ENCODE measurements at regions of chr16 and their contacts with region 1.

Region 1: GRCh38 chr16:1428511-1428910 is 2.4 kb upstream of the PERCC1 start:
- DNase-seq: peak; percentile 77
- ATAC-seq: peak; percentile 81
- H3K4me3 Mint-ChIP-seq: no peak overlapping the region
- H3K27ac Mint-ChIP-seq: no peak overlapping the region
- H3K4me1 Mint-ChIP-seq: no peaks in the 10 kb centered on the region
- H3K27me3 Mint-ChIP-seq: no peaks in the 10 kb centered on the region
- CTCF ChIP-seq: no peak

Region 2: DNA sequence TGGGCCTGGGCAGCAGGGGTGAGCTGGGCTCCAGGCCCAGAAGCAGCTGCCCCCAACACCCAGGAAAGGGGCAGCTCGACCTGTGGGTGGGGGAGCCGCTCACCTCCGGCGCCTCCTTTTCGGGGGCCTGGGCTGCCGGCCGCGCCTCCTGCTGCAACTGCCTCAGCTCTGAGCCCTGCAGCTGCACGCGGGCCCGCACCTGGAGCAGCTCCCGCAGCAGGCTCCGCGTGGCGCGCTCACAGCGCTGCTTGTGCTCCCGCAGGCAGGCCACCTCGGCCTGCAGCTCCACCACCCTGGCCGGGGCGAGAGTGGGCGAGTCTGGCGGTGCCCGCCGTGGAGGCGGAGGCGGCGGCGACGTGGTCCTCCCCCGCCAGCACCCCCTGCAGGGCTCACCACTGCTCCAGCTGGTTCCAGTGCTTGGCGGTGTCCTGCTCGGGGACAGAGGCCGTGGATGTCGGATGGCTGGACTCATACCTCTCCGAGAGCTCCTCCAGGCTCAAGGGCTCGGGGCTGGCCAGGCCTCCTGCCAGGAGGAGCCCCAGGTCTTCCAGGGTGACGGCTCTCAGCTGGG is 15.0 kb after region 1 on chr16:
- CTCF ChIA-PET with region 1: interaction called, 14 read pairs
- POLR2A ChIA-PET with region 1: no interaction called
- DNase-seq: no peak
- ATAC-seq: peak; percentile 11; the same call in 1 of the 2 replicates
- H3K4me3 Mint-ChIP-seq: no peak overlapping the region
- H3K27ac Mint-ChIP-seq: no peak overlapping the region
- H3K4me1 Mint-ChIP-seq: no peaks in the 10 kb centered on the region
- H3K27me3 Mint-ChIP-seq: no peaks in the 10 kb centered on the region
- CTCF ChIP-seq: no peak

Measured in WTC11 (cell line).